Activated CD4-positive, alpha-beta memory T cell treated with anti-CD3 and anti-CD28 coated beads for 36 hours (primary cell): ENCODE measurements at regions of chr3 and their contacts with region 1.

Region 1: GRCh38 chr3:195207731-195208585 is 63.0 kb downstream of the XXYLT1 start:
- DNase-seq: peak; percentile 63
- H3K4me3 Mint-ChIP-seq: no peak overlapping the region
- H3K27ac Mint-ChIP-seq: no peak overlapping the region
- H3K4me1 Mint-ChIP-seq: peaks cover 22% of the 10 kb centered on the region
- H3K27me3 Mint-ChIP-seq: no peaks in the 10 kb centered on the region

Region 2: GRCh38 chr3:195194559-195195206 is 13.3 kb before region 1 on chr3:
- CTCF ChIA-PET with region 1: no interaction called
- POLR2A ChIA-PET with region 1: no interaction called
- intact Hi-C with region 1: loop called (anchors 1 kb)
- DNase-seq: peak; percentile 29
- H3K4me3 Mint-ChIP-seq: peak overlapping the region; percentile 27
- H3K27ac Mint-ChIP-seq: no peak overlapping the region
- H3K4me1 Mint-ChIP-seq: peaks cover 27% of the 10 kb centered on the region
- H3K27me3 Mint-ChIP-seq: no peaks in the 10 kb centered on the region

Region 3: DNA sequence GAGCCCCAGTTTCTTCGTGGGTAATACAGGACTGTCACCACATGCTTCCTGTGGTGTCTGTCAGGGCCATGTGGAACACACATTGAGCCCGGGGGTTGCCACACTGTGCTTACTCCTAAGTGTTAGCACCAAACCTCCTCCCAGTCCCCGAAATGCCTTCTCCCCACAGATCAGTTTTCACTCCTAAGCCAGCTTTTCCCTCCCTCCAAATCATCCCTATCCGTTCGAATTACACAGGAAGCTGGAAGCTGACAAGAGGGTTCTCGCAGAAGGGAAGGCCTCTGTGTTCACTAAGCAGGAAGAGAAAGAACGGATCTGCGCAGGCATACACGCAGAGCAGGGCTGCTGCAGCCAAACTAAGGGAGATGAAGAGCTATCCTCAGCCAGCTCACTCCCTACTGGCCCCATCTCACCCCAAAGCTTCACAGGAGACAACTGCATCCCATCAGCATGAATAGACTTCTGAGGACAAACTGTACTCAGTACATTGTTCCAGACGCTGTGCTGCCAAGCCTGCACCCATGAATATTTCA is 30.7 kb after region 1 on chr3:
- CTCF ChIA-PET with region 1: no interaction called
- POLR2A ChIA-PET with region 1: no interaction called
- intact Hi-C with region 1: no loop called
- DNase-seq: no peak
- H3K4me3 Mint-ChIP-seq: no peak overlapping the region
- H3K27ac Mint-ChIP-seq: no peak overlapping the region
- H3K4me1 Mint-ChIP-seq: peaks cover 3% of the 10 kb centered on the region
- H3K27me3 Mint-ChIP-seq: no peaks in the 10 kb centered on the region

Region 4: GRCh38 chr3:195250473-195251251 is 42.7 kb after region 1 on chr3:
- CTCF ChIA-PET with region 1: no interaction called
- POLR2A ChIA-PET with region 1: no interaction called
- intact Hi-C with region 1: loop called (anchors 2 kb)
- DNase-seq: no peak
- H3K4me3 Mint-ChIP-seq: no peak overlapping the region
- H3K27ac Mint-ChIP-seq: no peak overlapping the region
- H3K4me1 Mint-ChIP-seq: peaks cover 16% of the 10 kb centered on the region
- H3K27me3 Mint-ChIP-seq: no peaks in the 10 kb centered on the region